ENCODE measurements at regions of chr5 and their contacts with region 1.

Region 1: GRCh38 chr5:113678924-113679575 is 165.6 kb downstream of the YTHDC2 start:
- DNase-seq: peak in 4 of 9 donors; percentile 1 to 22 (median 4)
- ATAC-seq: peak; percentile 36
- H3K4me3 ChIP-seq: no peak overlapping the region
- H3K4me3 Mint-ChIP-seq: no peak overlapping the region
- H3K27ac ChIP-seq: no peak overlapping the region
- H3K27ac Mint-ChIP-seq: no peak overlapping the region
- H3K4me1 ChIP-seq: no peaks in the 10 kb centered on the region
- H3K4me1 Mint-ChIP-seq: no peaks in the 10 kb centered on the region
- H3K27me3 ChIP-seq: no peaks in the 10 kb centered on the region
- H3K27me3 Mint-ChIP-seq: peaks cover 0 to 7% (median 4%) of the 10 kb centered on the region in 5 donors

Region 2: DNA sequence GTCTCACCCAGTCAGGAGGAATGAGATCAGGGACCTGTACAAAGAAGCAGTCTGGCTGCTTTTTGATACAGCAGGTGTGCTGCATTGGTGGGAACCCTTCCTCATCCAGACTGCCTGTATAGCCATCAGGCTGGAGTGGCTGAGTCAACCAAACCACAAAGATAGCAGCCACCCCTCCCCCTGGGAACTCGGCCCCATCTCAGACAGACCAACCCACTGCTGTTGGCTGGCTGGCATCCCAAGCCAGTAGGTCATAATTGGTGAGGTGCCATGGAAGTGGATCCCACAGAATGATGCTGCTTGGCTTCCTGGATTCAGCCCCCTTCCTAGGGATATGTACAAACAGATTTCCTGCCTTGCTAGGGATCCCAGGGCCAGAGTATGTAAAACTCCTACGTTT is 104.6 kb before region 1 on chr5:
- CTCF ChIA-PET with region 1: no interaction called
- POLR2A ChIA-PET with region 1: no interaction called
- intact Hi-C with region 1: no loop called
- DNase-seq: no peak
- ATAC-seq: no peak
- H3K4me3 ChIP-seq: no peak overlapping the region
- H3K4me3 Mint-ChIP-seq: no peak overlapping the region
- H3K27ac ChIP-seq: no peak overlapping the region
- H3K27ac Mint-ChIP-seq: no peak overlapping the region
- H3K4me1 ChIP-seq: no peaks in the 10 kb centered on the region
- H3K4me1 Mint-ChIP-seq: peaks cover 11 to 49% (median 38%) of the 10 kb centered on the region in 7 donors
- H3K27me3 ChIP-seq: no peaks in the 10 kb centered on the region
- H3K27me3 Mint-ChIP-seq: no peaks in the 10 kb centered on the region

Region 3: DNA sequence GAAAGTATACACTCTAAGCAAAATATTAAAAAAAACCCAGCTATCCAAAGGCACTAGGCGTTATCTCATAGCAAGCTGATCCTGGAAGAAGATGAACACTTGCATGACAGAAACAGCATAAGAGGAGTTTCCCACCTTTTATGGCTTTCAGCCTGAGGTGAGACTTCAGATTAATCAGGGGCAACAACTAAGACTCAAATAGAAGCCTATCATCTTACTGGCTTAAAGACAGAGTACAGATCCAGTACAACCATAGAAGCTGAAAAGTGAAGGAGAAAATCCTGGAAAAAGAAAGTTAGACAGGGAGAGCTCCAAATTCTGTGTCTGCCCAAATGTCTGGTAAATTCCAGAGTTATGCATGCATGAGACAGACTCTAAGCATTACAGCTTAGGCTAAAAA is 322.0 kb after region 1 on chr5:
- CTCF ChIA-PET with region 1: no interaction called
- POLR2A ChIA-PET with region 1: no interaction called
- intact Hi-C with region 1: no loop called
- DNase-seq: no peak
- ATAC-seq: no peak
- H3K4me3 ChIP-seq: no peak overlapping the region
- H3K4me3 Mint-ChIP-seq: no peak overlapping the region
- H3K27ac ChIP-seq: no peak overlapping the region
- H3K27ac Mint-ChIP-seq: no peak overlapping the region
- H3K4me1 ChIP-seq: no peaks in the 10 kb centered on the region
- H3K4me1 Mint-ChIP-seq: no peaks in the 10 kb centered on the region
- H3K27me3 ChIP-seq: no peaks in the 10 kb centered on the region
- H3K27me3 Mint-ChIP-seq: peaks cover 0 to 5% (median 0%) of the 10 kb centered on the region in 5 donors

Region 4: GRCh38 chr5:114449860-114450421 is 770.9 kb after region 1 on chr5:
- CTCF ChIA-PET with region 1: no interaction called
- POLR2A ChIA-PET with region 1: no interaction called
- intact Hi-C with region 1: loop called in 1 of 2 experiments (anchors 1 kb)
- DNase-seq: peak in 7 of 9 donors; percentile 4 to 35 (median 8)
- ATAC-seq: peak; percentile 67
- H3K4me3 ChIP-seq: no peak overlapping the region
- H3K4me3 Mint-ChIP-seq: no peak overlapping the region
- H3K27ac ChIP-seq: no peak overlapping the region
- H3K27ac Mint-ChIP-seq: no peak overlapping the region
- H3K4me1 ChIP-seq: no peaks in the 10 kb centered on the region
- H3K4me1 Mint-ChIP-seq: peaks cover 0 to 6% (median 0%) of the 10 kb centered on the region in 7 donors
- H3K27me3 ChIP-seq: no peaks in the 10 kb centered on the region
- H3K27me3 Mint-ChIP-seq: peaks cover 0 to 15% (median 8%) of the 10 kb centered on the region in 5 donors

Region 5: DNA sequence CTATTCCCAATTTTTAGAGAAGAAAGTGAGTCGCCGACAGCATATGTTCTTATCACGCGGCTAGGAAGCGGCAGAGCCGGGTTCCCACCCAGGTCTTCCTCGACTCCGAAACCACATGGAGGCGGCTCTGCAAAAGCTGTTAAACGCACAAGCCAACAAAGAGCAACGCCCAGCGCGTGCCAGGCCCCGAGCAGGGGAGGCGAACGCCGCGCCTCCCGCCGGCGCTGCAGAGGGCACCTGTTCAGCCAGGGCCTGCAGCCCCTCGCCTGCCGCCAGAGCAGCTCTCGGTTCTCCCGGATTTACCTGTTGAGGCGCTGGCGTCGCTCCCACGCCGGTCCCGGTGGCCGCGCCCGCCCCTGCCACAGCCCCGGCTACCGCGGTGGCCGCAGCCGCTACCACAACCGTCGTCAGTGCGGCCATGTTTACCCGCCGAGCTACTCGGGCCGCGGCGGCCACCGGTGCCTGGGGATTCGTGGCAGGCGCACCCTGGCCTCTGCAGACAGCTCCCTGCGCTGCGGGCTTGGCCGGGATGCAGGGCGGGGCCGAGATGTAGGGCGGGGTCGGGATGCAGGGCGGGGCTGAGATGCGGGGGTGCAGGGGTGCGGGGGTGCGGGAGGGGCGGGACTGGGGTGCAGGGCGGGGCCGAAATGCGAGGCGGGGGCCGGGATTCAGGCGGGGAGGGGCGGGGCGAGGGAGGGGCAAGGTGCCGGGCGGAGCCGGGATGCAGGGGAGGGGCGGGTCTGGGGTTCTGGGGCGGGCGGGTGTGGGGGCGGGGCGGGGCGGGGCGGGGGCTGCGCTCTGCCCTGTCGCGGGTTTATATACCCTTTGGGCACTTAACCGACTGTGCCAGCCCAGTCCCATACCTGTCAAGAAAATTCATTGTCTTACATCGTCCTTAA is 1617.3 kb after region 1 on chr5 and contains the start of gene CCDC112:
- CTCF ChIA-PET with region 1: no interaction called
- POLR2A ChIA-PET with region 1: no interaction called
- intact Hi-C with region 1: no loop called
- DNase-seq: peak; percentile 49 to 71 (median 67)
- ATAC-seq: peak; percentile 83
- H3K4me3 ChIP-seq: peak within 1 kb of the TSS; percentile 56
- H3K4me3 Mint-ChIP-seq: peak within 1 kb of the TSS; percentile 77 to 92 (median 89)
- H3K27ac ChIP-seq: peak within 1 kb of the TSS; percentile 47
- H3K27ac Mint-ChIP-seq: peak within 1 kb of the TSS in 8 of 9 donors; percentile 29 to 80 (median 69)
- H3K4me1 ChIP-seq: peaks cover 8 to 10% of the 10 kb centered on the region in 2 donors
- H3K4me1 Mint-ChIP-seq: peaks cover 5 to 18% (median 13%) of the 10 kb centered on the region in 7 donors
- H3K27me3 ChIP-seq: no peaks in the 10 kb centered on the region
- H3K27me3 Mint-ChIP-seq: peaks cover 0 to 69% (median 3%) of the 10 kb centered on the region in 5 donors
- total RNA-seq, gene CCDC112: 0.51 to 8.5 (median 3.9) TPM

Measured in naive thymus-derived CD4-positive, alpha-beta T cell (primary cell).